MCF 10A (cell line): ENCODE measurements at regions of chr17 and their contacts with region 1.

Region 1: DNA sequence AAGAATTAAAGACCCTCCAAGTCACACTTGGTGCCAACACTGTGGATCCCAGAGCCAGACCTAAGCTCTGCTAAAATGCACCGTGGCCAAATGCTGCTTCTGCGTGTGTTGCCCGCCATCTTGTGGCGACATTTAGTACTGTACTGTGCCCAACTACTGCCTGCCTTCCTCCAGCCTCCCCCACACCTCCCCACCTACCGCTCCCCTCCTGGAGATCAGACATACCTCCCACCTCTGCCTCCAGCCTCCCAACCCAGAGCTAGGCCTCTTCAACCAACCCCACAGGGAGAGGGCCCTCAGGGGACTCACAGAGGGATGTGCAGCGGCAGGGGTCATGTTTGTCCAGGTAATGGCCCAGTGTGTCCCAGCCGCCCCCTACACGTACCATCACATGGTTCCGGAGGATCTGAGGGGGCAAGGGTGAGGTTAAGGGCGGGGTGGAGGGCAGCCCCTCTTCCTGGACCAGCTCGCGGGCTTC is 5.5 kb downstream of the GAS2L2 start:
- DNase-seq: peak; percentile 80
- H3K4me3 Mint-ChIP-seq: no peak overlapping the region
- H3K27ac Mint-ChIP-seq: no peak overlapping the region
- H3K4me1 Mint-ChIP-seq: peaks cover 10% of the 10 kb centered on the region
- H3K27me3 Mint-ChIP-seq: peaks cover 16% of the 10 kb centered on the region
- CTCF ChIP-seq: peak; percentile 95

Region 2: DNA sequence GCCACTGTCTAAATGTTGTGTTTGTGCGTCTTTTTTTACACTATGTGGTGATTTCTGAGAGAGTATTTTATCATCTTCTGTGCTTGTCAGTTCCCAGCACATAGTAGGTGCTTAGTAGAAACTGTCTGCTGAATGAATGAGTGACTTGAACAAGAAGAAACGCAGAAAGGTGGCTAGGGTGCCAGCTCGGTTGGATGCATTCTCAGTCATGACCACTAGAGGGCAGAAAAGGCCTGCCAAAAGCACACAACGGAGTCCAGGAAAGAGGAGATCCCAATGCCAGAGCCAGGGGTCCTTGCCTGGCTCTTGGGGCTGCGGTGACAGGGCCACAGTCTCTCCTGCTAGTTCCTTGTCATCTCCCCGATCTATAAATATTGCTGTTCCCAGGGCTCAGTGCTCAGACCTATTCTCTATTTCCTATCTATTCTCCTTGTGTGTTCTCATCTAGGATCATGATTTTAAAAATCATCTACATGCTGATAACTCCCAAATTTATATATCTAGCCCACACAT is 1327.3 kb before region 1 on chr17:
- CTCF ChIA-PET with region 1: interaction called, 4 read pairs
- POLR2A ChIA-PET with region 1: no interaction called
- intact Hi-C with region 1: loop called (anchors 5 kb)
- DNase-seq: peak; percentile 63
- H3K4me3 Mint-ChIP-seq: no peak overlapping the region
- H3K27ac Mint-ChIP-seq: no peak overlapping the region
- H3K4me1 Mint-ChIP-seq: no peaks in the 10 kb centered on the region
- H3K27me3 Mint-ChIP-seq: peaks cover 1% of the 10 kb centered on the region
- CTCF ChIP-seq: peak; percentile 96

Region 3: GRCh38 chr17:35607239-35607847 is 140.2 kb before region 1 on chr17:
- CTCF ChIA-PET with region 1: interaction called, 150 read pairs
- POLR2A ChIA-PET with region 1: no interaction called
- intact Hi-C with region 1: no loop called
- DNase-seq: no peak
- H3K4me3 Mint-ChIP-seq: no peak overlapping the region
- H3K27ac Mint-ChIP-seq: no peak overlapping the region
- H3K4me1 Mint-ChIP-seq: no peaks in the 10 kb centered on the region
- H3K27me3 Mint-ChIP-seq: no peaks in the 10 kb centered on the region
- CTCF ChIP-seq: no peak

Region 4: GRCh38 chr17:35666967-35667532 is 80.5 kb before region 1 on chr17:
- CTCF ChIA-PET with region 1: interaction called, 35 read pairs
- POLR2A ChIA-PET with region 1: no interaction called
- intact Hi-C with region 1: loop called (anchors 10 kb)
- DNase-seq: no peak
- H3K4me3 Mint-ChIP-seq: no peak overlapping the region
- H3K27ac Mint-ChIP-seq: no peak overlapping the region
- H3K4me1 Mint-ChIP-seq: no peaks in the 10 kb centered on the region
- H3K27me3 Mint-ChIP-seq: no peaks in the 10 kb centered on the region
- CTCF ChIP-seq: no peak

Region 5: GRCh38 chr17:35716897-35717465 is 30.6 kb before region 1 on chr17:
- CTCF ChIA-PET with region 1: interaction called, 81 read pairs
- POLR2A ChIA-PET with region 1: interaction called, 3 read pairs
- intact Hi-C with region 1: no loop called
- DNase-seq: no peak
- H3K4me3 Mint-ChIP-seq: peak overlapping the region; percentile 4
- H3K27ac Mint-ChIP-seq: no peak overlapping the region
- H3K4me1 Mint-ChIP-seq: peaks cover 14% of the 10 kb centered on the region
- H3K27me3 Mint-ChIP-seq: no peaks in the 10 kb centered on the region
- CTCF ChIP-seq: no peak

Region 6: DNA sequence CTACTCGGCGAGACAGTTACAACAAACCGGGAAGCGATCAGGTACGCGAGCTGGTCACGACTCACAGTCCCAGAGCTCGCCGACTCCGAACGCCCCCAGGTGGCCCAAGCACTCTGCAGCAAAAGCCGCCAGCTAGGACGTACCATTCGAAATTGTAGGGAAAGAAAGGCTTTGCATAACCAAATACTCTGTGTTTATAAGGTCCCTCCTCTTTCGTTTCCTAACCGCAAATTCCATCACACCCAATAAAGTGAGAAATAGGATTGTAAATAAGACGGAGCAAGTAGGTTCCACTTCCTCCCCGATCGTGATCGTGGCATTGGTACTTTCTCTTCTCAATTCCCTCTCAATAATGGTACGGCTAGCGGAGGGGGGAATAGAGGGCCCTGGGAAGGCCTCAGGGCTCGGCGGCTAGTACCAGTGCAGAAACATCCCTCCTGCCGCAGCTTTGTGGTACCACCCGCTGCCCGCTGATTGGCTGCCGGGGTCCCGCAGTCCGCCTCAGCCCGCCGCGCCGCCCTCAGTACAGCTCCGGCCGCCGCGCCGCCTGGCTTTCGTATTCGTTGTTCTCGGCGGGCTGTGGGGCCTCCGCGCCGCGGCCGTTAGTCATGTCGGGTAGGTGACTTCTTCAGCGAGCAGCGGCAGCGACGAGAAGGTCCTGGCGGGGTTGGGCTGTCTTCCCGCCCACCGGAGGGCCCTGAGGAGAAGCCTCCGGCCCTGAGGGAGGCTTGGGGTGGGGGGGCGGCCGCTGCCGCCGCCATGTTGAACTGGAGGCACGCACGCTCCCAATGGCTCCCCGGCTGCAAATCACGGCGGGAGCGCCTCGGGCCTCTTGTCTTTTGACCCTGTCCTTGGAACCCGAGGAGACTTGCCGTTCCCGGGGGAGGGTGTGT is 61.6 kb after region 1 on chr17 and contains the start of gene TAF15:
- CTCF ChIA-PET with region 1: interaction called, 26 read pairs
- POLR2A ChIA-PET with region 1: interaction called, 16 read pairs
- intact Hi-C with region 1: no loop called
- DNase-seq: peak; percentile 99
- H3K4me3 Mint-ChIP-seq: peak within 1 kb of the TSS; percentile 92
- H3K27ac Mint-ChIP-seq: peak within 1 kb of the TSS; percentile 89
- H3K4me1 Mint-ChIP-seq: peaks cover 30% of the 10 kb centered on the region
- H3K27me3 Mint-ChIP-seq: no peaks in the 10 kb centered on the region
- CTCF ChIP-seq: peak; percentile 33
- total RNA-seq, gene TAF15: 284 and 337 TPM in 2 replicates

Region 7: DNA sequence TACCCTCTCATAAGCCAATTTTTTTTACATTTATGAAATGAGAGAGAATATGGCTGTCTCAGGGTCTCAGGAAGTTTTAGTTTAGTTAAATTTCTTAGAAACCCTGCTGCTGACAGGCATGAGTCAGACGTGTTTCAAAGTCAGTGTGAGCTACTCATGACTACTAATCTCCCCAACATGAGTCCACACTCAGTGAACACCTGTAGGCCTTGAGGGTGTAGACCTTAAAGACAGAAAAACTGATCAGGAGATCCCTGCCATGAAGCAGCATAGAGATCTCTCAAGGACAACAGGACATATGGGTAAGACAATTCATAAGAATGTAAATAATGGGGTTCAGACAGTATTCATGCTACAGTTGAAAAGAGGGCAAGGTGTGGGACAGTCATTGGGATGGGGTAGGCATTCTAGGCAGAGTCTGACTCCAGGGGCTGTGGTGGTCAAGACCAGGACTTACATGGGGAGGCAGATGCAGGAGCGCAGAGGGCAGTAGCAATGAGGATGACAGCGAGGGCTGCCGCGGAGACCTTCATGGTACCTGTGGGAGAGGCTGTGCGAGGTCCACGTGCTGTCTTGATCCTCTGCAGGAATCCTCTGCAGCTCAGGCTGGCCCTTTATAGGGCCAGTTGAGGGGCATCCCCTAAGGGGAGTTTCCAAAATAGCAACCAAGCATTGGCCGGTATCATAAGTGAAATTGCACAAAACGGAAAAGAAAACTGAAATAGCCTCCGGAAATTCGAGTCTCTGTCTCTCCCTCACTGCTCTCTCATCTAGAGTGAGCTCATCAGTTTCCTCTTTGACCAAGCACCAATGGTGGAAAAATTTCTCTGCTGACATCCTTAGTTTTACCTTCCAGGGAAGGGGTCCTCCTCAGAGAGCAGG is 132.4 kb after region 1 on chr17 and contains the start of gene CCL5:
- CTCF ChIA-PET with region 1: no interaction called
- POLR2A ChIA-PET with region 1: no interaction called
- intact Hi-C with region 1: no loop called
- DNase-seq: no peak
- H3K4me3 Mint-ChIP-seq: no peak within 1 kb of the TSS
- H3K27ac Mint-ChIP-seq: no peak within 1 kb of the TSS
- H3K4me1 Mint-ChIP-seq: peaks cover 5% of the 10 kb centered on the region
- H3K27me3 Mint-ChIP-seq: no peaks in the 10 kb centered on the region
- CTCF ChIP-seq: no peak
- total RNA-seq, gene CCL5: not detected in 2 replicates